ENCODE measurements at regions of chr9 and their contacts with region 1.

Region 1: GRCh38 chr9:72022841-72023240 is 37.6 kb downstream of the C9orf57 start:
- DNase-seq: no peak
- ATAC-seq: no peak
- H3K4me3 ChIP-seq: no peak overlapping the region
- H3K27ac ChIP-seq: no peak overlapping the region
- H3K4me1 ChIP-seq: no peaks in the 10 kb centered on the region
- H3K27me3 ChIP-seq: no peaks in the 10 kb centered on the region
- CTCF ChIP-seq: no peak
- POLR2A ChIP-seq: no peak

Region 2: GRCh38 chr9:71285191-71285656 is 737.6 kb before region 1 on chr9:
- in situ Hi-C with region 1: loop called in 1 of 4 experiments (anchors 25 kb)
- intact Hi-C with region 1: no loop called
- DNase-seq: no peak
- ATAC-seq: peak; percentile 70 to 83
- H3K4me3 ChIP-seq: no peak overlapping the region
- H3K27ac ChIP-seq: no peak overlapping the region
- H3K4me1 ChIP-seq: peaks cover 0 to 5% of the 10 kb centered on the region in 2 donors
- H3K27me3 ChIP-seq: no peaks in the 10 kb centered on the region
- CTCF ChIP-seq: peak; percentile 60 to 81 (median 68)
- POLR2A ChIP-seq: no peak

Region 3: GRCh38 chr9:71587576-71588362 is 435.1 kb before region 1 on chr9:
- in situ Hi-C with region 1: loop called in 1 of 4 experiments (anchors 25 kb)
- intact Hi-C with region 1: no loop called
- DNase-seq: no peak
- ATAC-seq: no peak
- H3K4me3 ChIP-seq: no peak overlapping the region
- H3K27ac ChIP-seq: no peak overlapping the region
- H3K4me1 ChIP-seq: no peaks in the 10 kb centered on the region
- H3K27me3 ChIP-seq: no peaks in the 10 kb centered on the region
- CTCF ChIP-seq: no peak
- POLR2A ChIP-seq: no peak

Region 4: GRCh38 chr9:71604197-71605063 is 418.4 kb before region 1 on chr9:
- in situ Hi-C with region 1: loop called in 2 of 4 experiments (anchors 25 kb)
- intact Hi-C with region 1: no loop called
- DNase-seq: peak; percentile 4 to 32
- ATAC-seq: no peak
- H3K4me3 ChIP-seq: no peak overlapping the region
- H3K27ac ChIP-seq: no peak overlapping the region
- H3K4me1 ChIP-seq: peaks cover 8% of the 10 kb centered on the region in 2 donors
- H3K27me3 ChIP-seq: no peaks in the 10 kb centered on the region
- CTCF ChIP-seq: peak; percentile 25 to 61 (median 51)
- POLR2A ChIP-seq: no peak

Region 5: DNA sequence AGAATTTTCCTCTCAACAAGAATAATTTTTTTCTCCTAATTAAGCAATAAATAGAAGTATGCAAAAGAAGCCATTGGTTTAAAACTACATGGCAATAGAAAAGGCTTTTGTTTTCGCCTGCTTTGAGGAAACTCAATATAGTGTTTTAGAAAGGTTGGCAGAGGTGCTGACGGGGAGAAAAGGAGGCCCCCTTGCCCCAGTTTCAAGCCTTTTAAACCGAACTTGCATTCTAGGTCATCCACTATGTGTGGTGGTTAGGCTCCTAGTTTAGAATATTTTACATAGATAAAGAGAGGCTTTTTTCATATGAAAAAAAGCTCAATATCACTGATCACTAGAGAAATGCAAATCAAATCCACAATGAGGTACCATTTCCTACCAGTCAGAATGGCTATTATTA is 221.0 kb before region 1 on chr9:
- in situ Hi-C with region 1: loop called (anchors 5 to 10 kb)
- intact Hi-C with region 1: loop called (anchors 1 kb)
- DNase-seq: no peak
- ATAC-seq: no peak
- H3K4me3 ChIP-seq: no peak overlapping the region
- H3K27ac ChIP-seq: no peak overlapping the region
- H3K4me1 ChIP-seq: peaks cover 0 to 8% of the 10 kb centered on the region in 2 donors
- H3K27me3 ChIP-seq: no peaks in the 10 kb centered on the region
- CTCF ChIP-seq: no peak
- POLR2A ChIP-seq: no peak

Region 6: GRCh38 chr9:71806901-71807307 is 215.9 kb before region 1 on chr9:
- in situ Hi-C with region 1: loop called (anchors 5 to 10 kb)
- intact Hi-C with region 1: loop called (anchors 1 kb)
- DNase-seq: peak; percentile 43 to 63
- ATAC-seq: peak; percentile 97 to 98
- H3K4me3 ChIP-seq: no peak overlapping the region
- H3K27ac ChIP-seq: peak overlapping the region in 1 of 4 donors; percentile 34
- H3K4me1 ChIP-seq: peaks cover 7 to 20% of the 10 kb centered on the region in 2 donors
- H3K27me3 ChIP-seq: no peaks in the 10 kb centered on the region
- CTCF ChIP-seq: peak; percentile 68 to 93 (median 87)
- POLR2A ChIP-seq: no peak

Region 7: DNA sequence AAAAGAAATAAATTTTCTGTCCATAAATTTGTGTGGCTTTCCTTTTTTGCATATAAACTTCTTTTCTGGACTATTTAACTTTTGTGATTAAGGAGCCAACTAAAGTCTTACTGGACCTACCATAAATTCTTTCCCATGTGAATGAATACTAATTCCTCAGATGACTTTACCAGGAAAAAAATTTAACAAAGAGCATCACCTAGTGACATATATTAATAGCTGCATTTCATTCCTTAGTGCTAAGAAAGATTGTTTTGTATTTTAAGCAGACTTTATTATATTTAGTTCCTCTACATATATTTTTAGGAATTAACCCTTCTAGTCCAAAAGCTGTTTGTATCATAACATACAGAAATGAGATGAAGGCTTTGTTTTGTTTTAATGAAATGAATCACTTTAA is 47.0 kb before region 1 on chr9:
- in situ Hi-C with region 1: no loop called
- intact Hi-C with region 1: no loop called
- DNase-seq: no peak
- ATAC-seq: no peak
- H3K4me3 ChIP-seq: no peak overlapping the region
- H3K27ac ChIP-seq: no peak overlapping the region
- H3K4me1 ChIP-seq: peaks cover 4 to 8% of the 10 kb centered on the region in 2 donors
- H3K27me3 ChIP-seq: no peaks in the 10 kb centered on the region
- CTCF ChIP-seq: peak in 1 of 5 experiments; percentile 31
- POLR2A ChIP-seq: no peak